Motor neuron (in vitro differentiated cells): ENCODE measurements at regions of chr2 and their contacts with region 1.

Region 1: GRCh38 chr2:96685577-96686459 is 43.3 kb downstream of the FER1L5 start:
- ATAC-seq: peak; percentile 79 to 97 (median 88)
- H3K4me3 ChIP-seq: no peak overlapping the region
- H3K27ac ChIP-seq: peak overlapping the region in 1 of 2 donors; percentile 28
- H3K4me1 ChIP-seq: peaks cover 4 to 19% of the 10 kb centered on the region in 2 donors

Region 2: GRCh38 chr2:96580771-96581170 is 105.0 kb before region 1 on chr2:
- in situ Hi-C with region 1: loop called in 1 of 9 experiments (anchors 25 kb)
- ATAC-seq: peak in 3 of 8 experiments; percentile 30 to 85 (median 39)
- H3K4me3 ChIP-seq: no peak overlapping the region
- H3K27ac ChIP-seq: no peak overlapping the region
- H3K4me1 ChIP-seq: no peaks in the 10 kb centered on the region